Esophagus muscularis mucosa (tissue), 4 donors: ENCODE measurements at regions of chr3 and their contacts with region 1.

Region 1: DNA sequence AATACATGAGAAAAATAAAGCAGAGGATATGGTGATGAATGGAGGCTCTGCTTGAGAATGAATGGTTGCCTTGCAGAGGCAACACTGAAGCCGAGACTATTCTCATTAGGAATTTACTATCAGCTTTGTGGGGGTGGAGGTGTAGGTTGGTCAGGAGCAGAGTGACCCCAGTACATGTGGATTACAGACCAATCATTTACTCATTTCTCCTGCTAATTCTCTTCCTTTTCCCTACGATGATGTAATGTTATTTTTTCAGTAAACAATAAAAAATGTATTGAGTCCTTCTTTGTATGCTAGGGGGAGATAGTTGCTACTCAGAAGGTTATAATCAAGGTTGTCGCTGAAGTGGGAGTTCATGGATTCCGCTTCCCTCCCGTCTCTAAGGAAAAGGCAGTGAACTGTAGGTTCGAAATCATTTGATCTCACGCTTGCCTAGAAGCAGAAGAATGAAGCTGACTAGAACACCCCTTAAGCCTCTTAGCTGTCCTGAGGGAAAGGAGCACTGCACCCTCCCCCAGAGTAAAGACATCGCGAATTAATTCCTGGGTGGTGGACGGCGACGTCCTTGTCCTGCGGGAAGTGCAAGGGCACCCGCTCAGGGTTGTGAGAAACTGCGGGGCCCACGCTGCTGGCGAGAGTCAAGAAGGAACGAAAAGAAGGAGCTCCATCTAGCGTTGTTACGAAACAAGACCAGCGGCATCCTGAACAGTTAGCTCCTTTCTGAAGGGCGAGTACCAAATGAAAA is 213.2 kb upstream of the PFN2 start:
- DNase-seq: peak; percentile 93
- H3K4me3 ChIP-seq: peak overlapping the region; percentile 40 to 56 (median 44)
- H3K27ac ChIP-seq: peak overlapping the region in 2 of 4 donors; percentile 24 to 27
- H3K4me1 ChIP-seq: peaks cover 5 to 22% (median 19%) of the 10 kb centered on the region in 4 donors
- H3K27me3 ChIP-seq: no peaks in the 10 kb centered on the region
- CTCF ChIP-seq: peak; percentile 64 to 72 (median 65)
- EP300 ChIP-seq: no peak
- POLR2A ChIP-seq: no peak

Region 2: GRCh38 chr3:149879872-149880271 is 304.0 kb before region 1 on chr3:
- intact Hi-C with region 1: loop called (anchors 10 kb)
- DNase-seq: no peak
- H3K4me3 ChIP-seq: no peak overlapping the region
- H3K27ac ChIP-seq: no peak overlapping the region
- H3K4me1 ChIP-seq: peaks cover 0 to 4% (median 0%) of the 10 kb centered on the region in 4 donors
- H3K27me3 ChIP-seq: no peaks in the 10 kb centered on the region
- CTCF ChIP-seq: peak; percentile 36 to 57 (median 48)
- EP300 ChIP-seq: no peak
- POLR2A ChIP-seq: no peak

Region 3: GRCh38 chr3:149964291-149964690 is 219.6 kb before region 1 on chr3:
- intact Hi-C with region 1: loop called (anchors 2 kb)
- DNase-seq: no peak
- H3K4me3 ChIP-seq: no peak overlapping the region
- H3K27ac ChIP-seq: no peak overlapping the region
- H3K4me1 ChIP-seq: peaks cover 25 to 47% (median 38%) of the 10 kb centered on the region in 4 donors
- H3K27me3 ChIP-seq: no peaks in the 10 kb centered on the region
- CTCF ChIP-seq: no peak
- EP300 ChIP-seq: no peak
- POLR2A ChIP-seq: no peak